Transverse colon (tissue), 4 donors: ENCODE measurements at regions of chr9 and their contacts with region 1.

Region 1: GRCh38 chr9:135045928-135046738 is 41.3 kb upstream of the OLFM1 start:
- DNase-seq: no peak
- H3K4me3 ChIP-seq: no peak overlapping the region
- H3K27ac ChIP-seq: no peak overlapping the region
- H3K4me1 ChIP-seq: no peaks in the 10 kb centered on the region
- H3K27me3 ChIP-seq: no peaks in the 10 kb centered on the region
- CTCF ChIP-seq: no peak
- EP300 ChIP-seq: no peak
- POLR2A ChIP-seq: no peak

Region 2: DNA sequence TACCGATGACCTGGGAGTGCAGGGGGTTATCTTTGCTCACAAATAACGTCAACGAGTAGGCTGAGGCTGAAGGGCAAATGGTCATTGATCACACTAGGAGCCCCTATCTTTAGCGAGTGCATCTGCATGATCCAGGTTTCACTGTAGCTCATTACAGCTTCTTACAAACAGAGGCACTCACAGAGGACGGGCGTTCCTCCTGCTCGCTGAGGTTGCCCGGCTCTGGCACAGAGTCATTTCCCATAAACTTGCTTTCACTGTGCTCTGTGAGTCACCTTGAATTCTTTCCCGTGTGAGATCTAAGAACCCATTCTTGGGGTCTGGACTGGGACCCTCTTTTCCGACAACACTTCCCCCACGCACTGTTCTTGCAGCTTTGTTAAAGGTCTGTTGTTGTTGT is 513.5 kb after region 1 on chr9:
- in situ Hi-C with region 1: no loop called
- intact Hi-C with region 1: loop called (anchors 10 kb)
- DNase-seq: no peak
- H3K4me3 ChIP-seq: no peak overlapping the region
- H3K27ac ChIP-seq: no peak overlapping the region
- H3K4me1 ChIP-seq: no peaks in the 10 kb centered on the region
- H3K27me3 ChIP-seq: peaks cover 2% of the 10 kb centered on the region
- CTCF ChIP-seq: no peak
- EP300 ChIP-seq: no peak
- POLR2A ChIP-seq: no peak